CD8-positive, alpha-beta memory T cell (primary cell): ENCODE measurements at regions of chr11 and their contacts with region 1.

Region 1: DNA sequence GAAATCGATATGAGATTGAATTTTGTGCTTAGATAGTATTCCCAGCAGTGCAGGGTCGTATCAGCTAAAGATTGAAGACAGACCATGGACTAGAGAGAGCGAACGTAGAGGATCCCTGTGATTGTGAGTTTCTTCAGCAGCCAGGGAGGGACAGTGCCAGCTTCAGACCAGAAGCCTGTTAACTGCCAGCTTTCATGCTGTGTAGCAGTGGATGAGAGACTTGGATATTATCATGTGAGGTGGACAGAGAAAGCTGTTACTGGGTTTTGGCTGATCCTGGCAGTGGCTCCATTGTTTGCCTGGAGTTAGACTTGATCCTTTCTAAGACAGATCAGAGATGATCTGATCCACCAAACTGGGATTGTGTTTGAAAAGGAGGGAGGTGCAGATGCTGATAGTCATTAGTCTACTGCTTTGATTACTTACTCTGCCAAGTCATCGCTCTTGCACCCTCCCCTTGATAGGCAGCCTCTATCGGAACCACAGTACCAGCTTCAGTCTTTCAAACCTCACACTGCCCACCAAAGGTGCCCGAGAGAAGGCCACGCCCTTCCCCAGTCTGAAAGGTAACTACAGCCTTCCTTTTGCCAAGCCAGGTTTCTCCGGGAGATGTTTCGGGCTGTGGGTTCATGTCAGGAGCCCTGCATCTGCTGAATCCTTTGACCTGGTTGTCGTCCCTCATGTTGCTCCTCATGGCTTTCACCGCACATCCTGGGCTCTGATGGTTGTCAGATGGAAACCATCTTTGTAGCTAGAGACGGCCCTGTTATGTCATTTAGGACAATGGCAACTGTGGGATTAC is 16.2 kb downstream of the MADD start:
- DNase-seq: no peak
- H3K4me3 ChIP-seq: no peak overlapping the region
- H3K4me3 Mint-ChIP-seq: no peak overlapping the region
- H3K27ac ChIP-seq: no peak overlapping the region
- H3K27ac Mint-ChIP-seq: peak overlapping the region in 1 of 8 donors; percentile 79
- H3K4me1 ChIP-seq: no peaks in the 10 kb centered on the region
- H3K4me1 Mint-ChIP-seq: peaks cover 0 to 2% (median 0%) of the 10 kb centered on the region in 3 donors
- H3K27me3 ChIP-seq: no peaks in the 10 kb centered on the region
- H3K27me3 Mint-ChIP-seq: no peaks in the 10 kb centered on the region

Region 2: DNA sequence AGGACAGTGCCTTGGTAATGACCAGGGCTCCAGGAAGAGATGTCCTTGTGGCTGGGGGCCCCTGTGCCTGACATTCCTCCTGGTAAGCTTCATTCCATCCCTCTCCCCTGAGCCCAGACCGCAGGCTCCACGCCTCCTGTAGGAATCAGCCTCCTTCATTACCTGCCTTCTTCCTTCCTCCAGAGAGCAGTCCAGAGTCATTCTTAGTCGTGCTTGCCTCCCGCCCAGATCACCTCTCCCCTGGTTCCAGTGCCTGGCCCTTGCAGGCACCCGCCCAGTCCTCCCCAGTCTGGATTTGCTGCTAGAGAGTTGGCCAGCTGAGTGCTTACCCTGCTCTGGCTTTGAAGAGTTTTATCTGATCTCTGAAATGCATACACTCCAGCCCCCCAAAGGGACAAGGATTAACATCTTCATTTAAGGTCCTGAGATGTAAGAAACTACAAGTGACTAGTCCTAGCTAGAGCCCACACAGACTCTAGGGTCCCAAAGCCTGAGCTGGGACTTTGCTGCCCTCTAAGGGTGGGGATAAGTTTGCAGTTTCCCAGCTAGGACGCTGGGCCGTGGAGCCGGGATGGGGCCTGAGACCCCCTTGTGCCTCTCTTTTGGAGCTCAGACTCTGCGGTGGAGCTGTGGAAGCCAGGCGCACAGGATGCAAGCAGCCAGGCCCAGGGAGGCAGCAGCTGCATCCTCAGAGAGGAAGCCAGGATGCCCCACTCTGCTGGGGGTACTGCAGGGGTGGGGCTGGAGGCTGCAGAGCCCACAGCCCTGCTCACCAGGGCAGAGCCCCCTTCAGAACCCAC is 26.8 kb before region 1 on chr11:
- CTCF ChIA-PET with region 1: no interaction called
- POLR2A ChIA-PET with region 1: no interaction called
- DNase-seq: peak in 3 of 5 donors; percentile 16 to 57 (median 29)
- H3K4me3 ChIP-seq: no peak overlapping the region
- H3K4me3 Mint-ChIP-seq: peak overlapping the region in 1 of 7 donors; percentile 74
- H3K27ac ChIP-seq: no peak overlapping the region
- H3K27ac Mint-ChIP-seq: peak overlapping the region in 3 of 8 donors; percentile 20 to 68 (median 47)
- H3K4me1 ChIP-seq: peaks cover 8% of the 10 kb centered on the region
- H3K4me1 Mint-ChIP-seq: peaks cover 0 to 9% (median 2%) of the 10 kb centered on the region in 3 donors
- H3K27me3 ChIP-seq: no peaks in the 10 kb centered on the region
- H3K27me3 Mint-ChIP-seq: no peaks in the 10 kb centered on the region

Region 3: GRCh38 chr11:47305734-47306483 is 19.7 kb after region 1 on chr11:
- CTCF ChIA-PET with region 1: no interaction called
- POLR2A ChIA-PET with region 1: no interaction called
- DNase-seq: no peak
- H3K4me3 ChIP-seq: no peak overlapping the region
- H3K4me3 Mint-ChIP-seq: no peak overlapping the region
- H3K27ac ChIP-seq: no peak overlapping the region
- H3K27ac Mint-ChIP-seq: no peak overlapping the region
- H3K4me1 ChIP-seq: no peaks in the 10 kb centered on the region
- H3K4me1 Mint-ChIP-seq: peaks cover 5 to 9% (median 8%) of the 10 kb centered on the region in 3 donors
- H3K27me3 ChIP-seq: no peaks in the 10 kb centered on the region
- H3K27me3 Mint-ChIP-seq: no peaks in the 10 kb centered on the region

Region 4: DNA sequence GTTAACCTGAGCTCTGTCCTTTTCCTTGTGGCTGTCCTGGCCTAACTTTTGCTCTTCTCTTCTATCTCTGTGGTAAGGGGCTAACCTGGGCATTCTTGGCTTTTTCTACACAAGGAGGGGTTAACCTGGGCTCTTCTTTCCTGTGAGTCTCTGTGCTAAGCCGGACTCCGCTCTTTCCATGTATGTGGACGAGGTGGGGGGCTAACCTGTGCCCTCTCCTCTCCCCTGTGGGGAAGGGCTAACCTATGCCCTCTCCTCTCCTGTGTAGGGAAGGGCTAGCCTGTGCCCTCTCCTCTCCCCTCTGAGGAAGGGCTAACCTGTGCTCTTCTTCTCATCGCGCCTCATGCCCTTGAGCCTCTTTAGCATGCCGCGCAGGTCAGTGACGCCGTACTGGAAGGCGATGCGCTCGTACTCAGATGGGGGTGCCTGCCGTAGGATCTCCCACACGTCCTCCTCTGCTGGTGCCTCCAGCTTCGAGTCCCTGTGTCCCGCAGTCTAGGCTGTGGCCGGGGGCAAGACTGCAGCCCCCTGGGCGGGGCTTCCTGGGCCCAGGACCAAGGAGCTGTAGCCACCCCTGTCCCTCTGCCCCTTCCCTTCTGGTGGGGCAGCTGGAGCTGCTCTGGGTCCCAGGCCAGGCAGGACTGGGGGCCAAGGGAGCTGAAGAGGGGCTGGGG is 59.9 kb after region 1 on chr11:
- CTCF ChIA-PET with region 1: no interaction called
- POLR2A ChIA-PET with region 1: interaction called, 11 read pairs
- DNase-seq: no peak
- H3K4me3 ChIP-seq: no peak overlapping the region
- H3K4me3 Mint-ChIP-seq: no peak overlapping the region
- H3K27ac ChIP-seq: no peak overlapping the region
- H3K27ac Mint-ChIP-seq: peak overlapping the region in 2 of 8 donors; percentile 4 to 73
- H3K4me1 ChIP-seq: no peaks in the 10 kb centered on the region
- H3K4me1 Mint-ChIP-seq: no peaks in the 10 kb centered on the region
- H3K27me3 ChIP-seq: no peaks in the 10 kb centered on the region
- H3K27me3 Mint-ChIP-seq: peaks cover 0 to 4% of the 10 kb centered on the region in 2 donors